ENCODE measurements at regions of chr2 and their contacts with region 1.

Region 1: GRCh38 chr2:38602732-38603401 is at the start of gene HNRNPLL:
- DNase-seq: peak; percentile 93 to 99
- ATAC-seq: peak; percentile 93 to 94
- H3K4me3 ChIP-seq: peak within 1 kb of the TSS; percentile 91
- H3K27ac ChIP-seq: peak within 1 kb of the TSS; percentile 95 to 97
- H3K4me1 ChIP-seq: peaks cover 39% of the 10 kb centered on the region
- CTCF ChIP-seq: no peak
- EP300 ChIP-seq: no peak
- POLR2A ChIP-seq: peak; percentile 98
- RAD21 ChIP-seq: no peak
- polyA plus RNA-seq, gene HNRNPLL: 67.5 and 73.8 TPM in 2 replicates

Region 2: DNA sequence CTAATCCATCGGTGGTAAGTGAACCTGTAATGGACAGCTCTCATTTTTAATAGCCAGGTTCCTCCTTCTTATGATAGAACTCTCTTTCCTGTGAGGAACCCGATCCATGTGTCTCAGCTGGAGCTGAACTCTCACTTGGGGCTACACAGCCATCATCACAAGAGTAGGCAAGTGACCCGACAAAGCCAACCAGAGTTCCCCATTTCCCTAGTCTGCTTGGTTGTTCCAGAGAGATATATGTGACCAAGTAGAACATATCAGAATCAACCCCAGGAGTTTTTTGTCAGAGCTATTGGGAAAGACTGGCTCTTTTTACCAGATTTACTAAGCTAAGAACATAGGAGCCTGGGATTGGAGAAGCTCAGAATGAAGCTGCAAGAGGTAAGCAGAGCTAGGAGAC is 14.4 kb after region 1 on chr2:
- CTCF ChIA-PET with region 1: interaction called, 44 read pairs
- POLR2A ChIA-PET with region 1: no interaction called
- DNase-seq: no peak
- ATAC-seq: no peak
- H3K4me3 ChIP-seq: no peak overlapping the region
- H3K27ac ChIP-seq: no peak overlapping the region
- H3K4me1 ChIP-seq: peaks cover 6% of the 10 kb centered on the region; the same call in 2 of the 3 replicates
- CTCF ChIP-seq: no peak
- EP300 ChIP-seq: no peak
- POLR2A ChIP-seq: no peak
- RAD21 ChIP-seq: no peak

Region 3: GRCh38 chr2:38665854-38666555 is 63.1 kb after region 1 on chr2 and contains the start of gene GALM:
- CTCF ChIA-PET with region 1: interaction called, 28 read pairs
- POLR2A ChIA-PET with region 1: interaction called, 7 read pairs
- DNase-seq: peak; percentile 86 to 91
- ATAC-seq: peak; percentile 91 to 96
- H3K4me3 ChIP-seq: peak within 1 kb of the TSS; percentile 54
- H3K27ac ChIP-seq: peak within 1 kb of the TSS; percentile 71 to 89
- H3K4me1 ChIP-seq: peaks cover 13% of the 10 kb centered on the region
- CTCF ChIP-seq: no peak
- EP300 ChIP-seq: no peak
- POLR2A ChIP-seq: peak; percentile 61
- RAD21 ChIP-seq: no peak; a peak in 1 of 5 replicates
- polyA plus RNA-seq, gene GALM: 34.1 and 34.2 TPM in 2 replicates

Region 4: DNA sequence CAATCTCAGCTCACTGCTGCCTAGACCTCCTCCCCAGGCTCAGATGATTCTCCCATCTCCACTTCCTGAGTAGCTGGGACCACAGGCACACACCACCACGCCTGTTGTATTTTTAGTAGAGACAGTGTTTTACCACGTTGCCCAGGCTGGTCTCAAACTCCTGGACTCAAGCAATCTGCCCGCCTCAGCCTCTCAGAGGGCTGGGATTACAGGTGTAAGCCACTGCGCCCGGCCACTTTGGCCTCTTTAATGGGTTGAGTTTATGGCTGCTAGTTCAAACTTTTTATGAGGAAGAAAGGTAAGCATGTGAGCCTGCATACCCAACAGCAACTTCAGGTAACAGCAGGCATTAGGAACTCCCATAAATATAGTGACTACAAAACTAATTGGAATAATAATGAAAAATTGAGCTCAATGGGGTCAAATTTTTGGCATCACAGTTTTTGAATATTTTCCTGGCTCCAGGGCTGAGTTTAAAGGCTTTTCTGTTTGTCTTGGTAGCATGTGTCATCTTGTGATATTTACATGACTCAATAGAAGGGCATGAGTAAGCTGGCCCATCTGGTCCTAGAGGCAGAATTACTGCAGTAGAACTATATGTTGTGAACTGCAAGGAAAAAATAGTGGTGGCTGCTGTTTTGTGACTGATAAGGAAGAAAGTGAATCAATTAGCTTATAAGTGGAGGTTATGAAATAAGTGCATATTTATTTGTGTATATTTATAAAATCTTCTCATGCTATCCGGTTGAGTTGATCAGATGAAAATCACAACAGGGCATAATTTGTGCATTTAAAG is 87.8 kb after region 1 on chr2:
- CTCF ChIA-PET with region 1: interaction called, 11 read pairs
- POLR2A ChIA-PET with region 1: interaction called, 6 read pairs
- DNase-seq: peak; percentile 88 to 99
- ATAC-seq: peak; percentile 98 to 99
- H3K4me3 ChIP-seq: 0 out of 3 replicates have a peak overlapping the region, but pooled peaks have one; percentile 5
- H3K27ac ChIP-seq: peak overlapping the region; percentile 90 to 93
- H3K4me1 ChIP-seq: peaks cover 63% of the 10 kb centered on the region
- CTCF ChIP-seq: no peak
- EP300 ChIP-seq: peak; percentile 73 to 84; a peak in 2 of 5 replicates
- POLR2A ChIP-seq: no peak
- RAD21 ChIP-seq: peak; percentile 34 to 52

Region 5: DNA sequence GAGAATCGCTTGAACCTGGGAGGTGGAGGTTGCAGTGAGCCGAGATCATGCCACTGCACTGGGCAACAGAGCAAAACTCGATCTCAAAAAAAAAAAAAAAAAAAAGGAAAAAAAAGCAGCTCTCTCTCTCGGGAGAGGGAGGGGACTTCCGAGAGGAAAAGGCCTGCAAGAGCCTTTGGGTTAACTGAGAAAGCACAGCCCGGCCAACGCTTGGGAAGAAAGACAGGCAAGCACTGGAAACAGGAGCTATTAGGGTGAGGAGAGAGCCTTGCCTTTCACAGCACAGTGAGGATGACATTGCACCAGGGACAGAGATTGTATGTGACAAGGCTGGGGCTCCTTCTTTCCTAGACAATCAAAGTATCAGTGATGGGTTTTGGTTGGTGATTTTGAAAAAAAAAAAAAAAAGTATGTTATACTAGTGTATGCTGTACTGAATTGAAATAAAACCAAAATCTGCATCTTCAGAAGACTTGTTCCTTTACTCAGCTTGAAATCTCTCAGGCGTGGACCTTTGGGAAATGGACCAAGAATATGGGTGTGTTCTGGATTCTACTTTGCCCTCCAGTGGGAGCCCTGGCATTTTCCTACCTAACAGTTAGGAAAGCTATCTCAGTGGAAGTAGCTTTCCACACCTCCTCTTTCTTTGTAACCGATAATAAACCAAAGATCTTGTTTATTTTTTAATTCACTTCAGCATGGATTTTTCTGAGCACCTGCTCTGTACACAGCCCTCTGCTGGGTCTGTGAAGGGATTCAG is 131.6 kb after region 1 on chr2:
- CTCF ChIA-PET with region 1: interaction called, 152 read pairs
- POLR2A ChIA-PET with region 1: no interaction called
- DNase-seq: no peak
- ATAC-seq: peak in 1 of 2 experiments; percentile 16; a peak in 2 of 6 replicates
- H3K4me3 ChIP-seq: no peak overlapping the region
- H3K27ac ChIP-seq: no peak overlapping the region
- H3K4me1 ChIP-seq: no peaks in the 10 kb centered on the region
- CTCF ChIP-seq: no peak
- EP300 ChIP-seq: no peak
- POLR2A ChIP-seq: no peak
- RAD21 ChIP-seq: no peak